Psoas muscle (tissue), 8 donors: ENCODE measurements at regions of chr14 and their contacts with region 1.

Region 1: DNA sequence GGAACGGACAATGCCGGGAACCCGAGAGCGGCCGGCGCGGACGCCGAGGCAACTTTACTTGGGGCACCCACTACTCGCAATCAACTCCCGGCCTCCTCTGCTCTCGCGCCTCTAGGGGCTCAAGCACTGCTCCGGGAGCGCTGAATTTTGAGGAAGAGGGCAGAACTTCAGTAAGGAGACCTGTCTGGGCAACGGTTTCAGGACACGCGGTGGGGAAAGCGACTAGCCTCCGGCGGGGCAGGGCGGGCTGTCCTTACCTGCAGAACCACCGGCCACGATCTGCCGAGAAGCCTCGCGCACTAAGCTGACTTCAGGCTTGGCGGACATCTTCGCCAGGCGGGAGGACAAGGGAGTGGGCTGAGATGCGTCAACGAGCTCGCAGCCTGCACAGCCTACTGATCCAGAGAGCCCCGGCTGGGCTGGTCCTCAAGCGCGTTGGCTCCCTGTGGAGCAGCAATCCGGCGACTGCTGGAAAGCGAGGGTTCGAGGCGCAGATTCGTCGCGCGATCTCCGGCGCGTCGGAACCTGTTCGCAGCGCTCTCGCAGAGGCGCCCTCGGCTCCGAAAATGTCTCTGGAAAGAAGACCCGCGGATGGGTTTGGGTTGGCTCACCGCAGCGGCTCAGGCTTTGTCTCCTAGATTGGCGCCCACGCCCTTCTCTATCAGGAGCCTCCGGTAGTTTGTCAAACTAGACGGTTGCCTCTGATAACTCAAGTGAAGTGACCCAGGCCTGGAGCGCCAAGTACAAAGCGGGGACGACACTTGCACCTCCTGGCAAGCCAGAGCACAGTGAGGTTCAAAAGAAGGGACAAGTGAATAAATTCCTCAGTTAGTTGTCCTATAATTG is at the start of gene SLC25A21:
- DNase-seq: peak; percentile 69 to 84
- ATAC-seq: peak; percentile 91 to 97 (median 97)
- H3K4me3 ChIP-seq: peak within 1 kb of the TSS; percentile 97
- H3K27ac ChIP-seq: peak within 1 kb of the TSS; percentile 93
- H3K4me1 ChIP-seq: peaks cover 27% of the 10 kb centered on the region
- H3K27me3 ChIP-seq: no peaks in the 10 kb centered on the region
- CTCF ChIP-seq: no peak
- total RNA-seq, gene SLC25A21: 0.13 to 0.37 (median 0.21) TPM

Region 2: GRCh38 chr14:37197421-37198272 is 25.4 kb after region 1 on chr14 and contains the start of gene MIPOL1:
- intact Hi-C with region 1: loop called in 1 of 2 experiments (anchors 2 kb)
- DNase-seq: peak; percentile 90 to 93
- ATAC-seq: peak; percentile 98 to 100 (median 100)
- H3K4me3 ChIP-seq: peak within 1 kb of the TSS; percentile 81
- H3K27ac ChIP-seq: peak within 1 kb of the TSS; percentile 79
- H3K4me1 ChIP-seq: peaks cover 6% of the 10 kb centered on the region
- H3K27me3 ChIP-seq: no peaks in the 10 kb centered on the region
- CTCF ChIP-seq: peak; percentile 33
- total RNA-seq, gene MIPOL1: 5.1 to 5.6 (median 5.3) TPM